Activated B cell treated with CpG ODN at 0.5 μM for 24 hours (primary cell): ENCODE measurements at regions of chr4 and their contacts with region 1.

Region 1: DNA sequence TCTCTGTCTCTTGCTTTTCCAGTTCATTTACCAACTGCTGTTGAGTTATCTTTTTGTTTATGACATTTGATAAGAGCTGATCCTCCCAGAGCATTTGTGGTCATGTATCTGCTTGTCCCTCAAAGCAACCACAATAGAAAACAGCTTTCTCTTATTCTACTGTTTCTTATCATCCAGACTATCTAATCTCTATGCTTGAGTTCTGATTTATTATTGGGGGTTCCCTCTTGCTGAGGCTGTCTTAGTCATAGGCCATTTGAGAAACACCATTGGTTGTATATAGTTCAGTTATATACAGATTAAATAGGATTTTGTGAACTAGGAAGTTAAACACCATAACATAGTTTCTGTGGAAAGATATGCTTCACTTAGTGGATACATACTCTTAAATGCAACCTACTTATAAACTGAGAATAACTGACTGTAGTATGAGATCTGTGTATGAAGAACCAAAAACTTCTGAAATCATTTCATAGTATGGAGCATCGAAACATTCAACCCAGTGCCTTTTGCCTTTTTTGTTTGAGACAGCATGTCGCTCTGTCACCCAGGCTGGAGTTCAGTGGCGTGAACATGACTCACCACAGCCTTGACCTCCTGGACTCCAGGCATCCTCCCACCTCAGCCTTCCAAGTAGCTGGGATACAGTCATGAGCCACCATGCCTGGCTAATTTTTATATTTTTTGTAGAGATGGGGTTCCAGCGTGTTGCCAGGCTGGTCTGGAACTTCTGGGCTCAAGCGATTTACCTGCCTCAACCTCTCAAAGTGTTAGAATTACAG is 75.8 kb downstream of the STIM2 start:
- DNase-seq: no peak
- ATAC-seq: no peak
- H3K4me3 Mint-ChIP-seq: no peak overlapping the region
- H3K27ac Mint-ChIP-seq: peak overlapping the region; percentile 46
- H3K4me1 Mint-ChIP-seq: peaks cover 68% of the 10 kb centered on the region
- H3K27me3 Mint-ChIP-seq: no peaks in the 10 kb centered on the region
- CTCF ChIP-seq: no peak

Region 2: GRCh38 chr4:26992657-26993361 is 56.3 kb after region 1 on chr4:
- CTCF ChIA-PET with region 1: no interaction called
- POLR2A ChIA-PET with region 1: no interaction called
- intact Hi-C with region 1: loop called (anchors 1 kb)
- DNase-seq: peak; percentile 26
- ATAC-seq: peak; percentile 80
- H3K4me3 Mint-ChIP-seq: no peak overlapping the region
- H3K27ac Mint-ChIP-seq: no peak overlapping the region
- H3K4me1 Mint-ChIP-seq: peaks cover 17% of the 10 kb centered on the region
- H3K27me3 Mint-ChIP-seq: no peaks in the 10 kb centered on the region
- CTCF ChIP-seq: no peak